Adrenal gland (tissue), 19 donors: ENCODE measurements at regions of chr1 and their contacts with region 1.

Region 1: DNA sequence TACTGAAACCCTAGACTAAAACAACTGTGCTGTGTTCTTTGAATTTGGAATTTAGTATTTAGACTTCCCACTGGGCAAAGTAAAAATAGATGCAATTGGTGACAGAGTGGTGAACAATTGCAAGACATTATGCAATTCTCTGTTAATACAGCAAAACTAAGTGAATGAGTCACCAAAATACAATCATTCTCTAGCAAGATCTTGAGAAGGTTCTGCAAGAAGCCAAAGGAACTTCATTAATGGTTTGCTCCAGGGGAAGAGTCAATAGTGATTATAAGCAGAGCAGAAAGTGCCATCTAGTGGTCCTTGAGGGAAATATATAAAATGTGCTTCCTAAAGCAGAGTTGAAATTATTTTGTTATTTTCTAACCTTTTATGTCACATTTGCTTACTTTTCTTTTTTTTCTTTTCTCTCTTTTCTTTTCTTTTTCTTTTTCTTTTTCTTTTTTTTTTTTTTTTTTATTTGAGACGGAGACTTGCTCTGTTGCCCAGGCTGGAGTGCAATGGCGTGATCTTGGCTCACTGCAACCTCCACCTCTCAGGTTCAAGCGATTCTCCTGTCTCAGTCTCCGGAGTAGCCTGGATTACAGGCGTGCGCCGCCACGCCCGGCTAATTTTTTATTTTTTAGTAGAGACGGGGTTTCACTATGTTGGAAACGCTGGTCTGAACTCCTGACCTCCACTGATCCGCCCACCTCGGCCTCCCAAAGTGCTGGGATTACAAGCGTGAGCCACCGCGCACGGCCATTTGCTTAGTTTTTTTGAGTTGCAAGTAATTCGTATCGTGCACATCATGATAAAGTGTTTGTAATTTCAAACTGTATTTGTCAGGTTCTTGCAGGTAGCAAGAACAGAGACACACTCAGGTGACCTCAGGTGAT is 99.2 kb downstream of the CTH start:
- DNase-seq: no peak
- H3K4me3 ChIP-seq: no peak overlapping the region
- H3K27ac ChIP-seq: no peak overlapping the region
- H3K4me1 ChIP-seq: no peaks in the 10 kb centered on the region
- H3K27me3 ChIP-seq: no peaks in the 10 kb centered on the region
- CTCF ChIP-seq: peak; percentile 56 to 81 (median 76)
- POLR2A ChIP-seq: no peak

Region 2: GRCh38 chr1:70134148-70134547 is 376.1 kb before region 1 on chr1:
- intact Hi-C with region 1: loop called in 1 of 2 experiments (anchors 10 kb)
- DNase-seq: peak; percentile 18 to 65 (median 42)
- H3K4me3 ChIP-seq: no peak overlapping the region
- H3K27ac ChIP-seq: peak overlapping the region in 4 of 5 donors; percentile 6 to 58 (median 30)
- H3K4me1 ChIP-seq: peaks cover 0 to 17% of the 10 kb centered on the region in 2 donors
- H3K27me3 ChIP-seq: no peaks in the 10 kb centered on the region
- CTCF ChIP-seq: peak in 2 of 6 experiments; percentile 3 to 11
- POLR2A ChIP-seq: no peak

Region 3: DNA sequence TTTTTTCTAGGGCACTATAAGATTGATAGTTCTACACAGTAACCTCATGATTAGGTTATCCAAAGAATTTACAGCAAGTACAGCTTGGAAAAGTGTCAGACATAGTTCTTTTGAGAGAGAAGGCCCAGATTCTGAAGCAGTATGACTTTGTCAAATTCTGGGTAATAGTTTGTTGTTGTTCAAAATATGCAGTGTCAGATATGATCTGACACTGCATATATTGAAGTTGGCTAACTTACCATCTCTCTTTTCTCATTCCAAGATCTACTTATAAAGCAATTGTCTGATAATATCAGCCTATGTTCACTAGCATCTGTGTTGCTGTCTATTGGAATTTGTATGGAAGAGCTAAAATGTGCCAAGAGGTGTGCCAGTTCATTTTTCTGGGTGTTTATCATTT is 61.0 kb after region 1 on chr1:
- intact Hi-C with region 1: no loop called
- DNase-seq: no peak
- H3K4me3 ChIP-seq: no peak overlapping the region
- H3K27ac ChIP-seq: no peak overlapping the region
- H3K4me1 ChIP-seq: no peaks in the 10 kb centered on the region
- H3K27me3 ChIP-seq: no peaks in the 10 kb centered on the region
- CTCF ChIP-seq: no peak
- POLR2A ChIP-seq: no peak